Dendritic cell treated with granulocyte-macrophage colony-stimulating factor and Interleukin-4, amounts not matched to agents 40 ng/mL and 50 ng/mL, for 4 days (primary cell): ENCODE measurements at regions of chr6 and their contacts with region 1.

Region 1: GRCh38 chr6:18122124-18123093 is at the start of gene NHLRC1:
- H3K4me3 Mint-ChIP-seq: peak within 1 kb of the TSS; percentile 72
- H3K27ac Mint-ChIP-seq: peak within 1 kb of the TSS; percentile 84
- H3K4me1 Mint-ChIP-seq: peaks cover 15% of the 10 kb centered on the region
- H3K27me3 Mint-ChIP-seq: no peaks in the 10 kb centered on the region

Region 2: DNA sequence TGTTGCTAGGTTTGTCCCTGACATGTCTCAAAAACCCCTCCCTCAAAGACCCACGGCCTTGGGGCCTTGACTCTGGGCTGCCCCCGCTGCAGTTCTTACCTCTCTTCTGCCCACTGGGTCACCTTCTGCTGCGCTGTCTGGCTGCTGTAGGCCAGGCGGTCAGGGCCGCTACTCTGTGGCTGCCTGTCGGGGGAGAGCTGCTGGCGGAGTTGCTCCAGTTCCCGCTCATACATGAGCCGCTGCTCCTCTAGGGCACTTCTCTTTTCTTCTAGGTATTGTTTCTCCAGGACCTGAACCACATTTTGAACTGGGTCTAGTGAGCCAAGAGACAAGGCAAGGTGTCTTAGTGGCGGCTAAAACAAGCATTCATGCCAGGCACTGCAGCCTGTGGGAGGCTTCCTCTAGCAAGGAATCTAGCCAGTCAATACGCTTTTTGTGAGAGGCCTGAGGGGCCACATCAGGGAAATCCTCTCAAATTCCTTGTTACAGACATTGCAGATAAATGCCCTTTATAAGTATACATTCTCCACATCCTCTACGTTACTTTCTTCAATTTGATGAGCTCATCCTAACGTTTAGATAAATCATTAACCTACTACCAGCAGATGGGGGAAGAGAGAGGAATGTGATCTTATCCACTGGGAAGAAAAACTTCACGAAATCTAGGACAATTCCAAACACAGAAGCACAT is 305.3 kb before region 1 on chr6:
- intact Hi-C with region 1: loop called (anchors 5 kb)
- H3K4me3 Mint-ChIP-seq: no peak overlapping the region
- H3K27ac Mint-ChIP-seq: no peak overlapping the region
- H3K4me1 Mint-ChIP-seq: peaks cover 7% of the 10 kb centered on the region
- H3K27me3 Mint-ChIP-seq: no peaks in the 10 kb centered on the region

Region 3: GRCh38 chr6:17831135-17831534 is 291.3 kb before region 1 on chr6:
- intact Hi-C with region 1: loop called (anchors 1 kb)
- H3K4me3 Mint-ChIP-seq: no peak overlapping the region
- H3K27ac Mint-ChIP-seq: no peak overlapping the region
- H3K4me1 Mint-ChIP-seq: no peaks in the 10 kb centered on the region
- H3K27me3 Mint-ChIP-seq: no peaks in the 10 kb centered on the region